ENCODE measurements at regions of chr1 and their contacts with region 1.

Region 1: DNA sequence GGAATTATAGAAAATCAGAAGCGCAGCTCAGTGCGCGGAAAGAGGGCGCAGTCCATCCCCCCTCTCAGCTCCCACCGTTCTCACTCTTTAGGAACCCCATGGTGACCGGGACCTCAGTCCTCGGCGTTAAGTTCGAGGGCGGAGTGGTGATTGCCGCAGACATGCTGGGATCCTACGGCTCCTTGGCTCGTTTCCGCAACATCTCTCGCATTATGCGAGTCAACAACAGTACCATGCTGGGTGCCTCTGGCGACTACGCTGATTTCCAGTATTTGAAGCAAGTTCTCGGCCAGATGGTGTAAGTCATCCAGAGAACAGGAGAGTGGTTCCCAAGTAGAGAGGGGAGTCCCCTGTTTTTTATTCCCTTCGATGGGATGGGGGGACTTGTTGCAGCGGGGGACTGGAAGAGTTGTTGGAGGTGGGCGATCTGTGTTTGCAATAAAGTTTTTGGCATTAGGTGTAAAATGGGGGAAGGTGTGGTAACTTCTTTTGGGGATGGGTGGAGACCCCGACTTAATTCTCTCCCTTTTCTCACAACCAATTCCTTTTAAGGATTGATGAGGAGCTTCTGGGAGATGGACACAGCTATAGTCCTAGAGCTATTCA is 620 bp downstream of the PSMB4 start:
- DNase-seq: no peak
- ATAC-seq: peak; percentile 11

Region 2: DNA sequence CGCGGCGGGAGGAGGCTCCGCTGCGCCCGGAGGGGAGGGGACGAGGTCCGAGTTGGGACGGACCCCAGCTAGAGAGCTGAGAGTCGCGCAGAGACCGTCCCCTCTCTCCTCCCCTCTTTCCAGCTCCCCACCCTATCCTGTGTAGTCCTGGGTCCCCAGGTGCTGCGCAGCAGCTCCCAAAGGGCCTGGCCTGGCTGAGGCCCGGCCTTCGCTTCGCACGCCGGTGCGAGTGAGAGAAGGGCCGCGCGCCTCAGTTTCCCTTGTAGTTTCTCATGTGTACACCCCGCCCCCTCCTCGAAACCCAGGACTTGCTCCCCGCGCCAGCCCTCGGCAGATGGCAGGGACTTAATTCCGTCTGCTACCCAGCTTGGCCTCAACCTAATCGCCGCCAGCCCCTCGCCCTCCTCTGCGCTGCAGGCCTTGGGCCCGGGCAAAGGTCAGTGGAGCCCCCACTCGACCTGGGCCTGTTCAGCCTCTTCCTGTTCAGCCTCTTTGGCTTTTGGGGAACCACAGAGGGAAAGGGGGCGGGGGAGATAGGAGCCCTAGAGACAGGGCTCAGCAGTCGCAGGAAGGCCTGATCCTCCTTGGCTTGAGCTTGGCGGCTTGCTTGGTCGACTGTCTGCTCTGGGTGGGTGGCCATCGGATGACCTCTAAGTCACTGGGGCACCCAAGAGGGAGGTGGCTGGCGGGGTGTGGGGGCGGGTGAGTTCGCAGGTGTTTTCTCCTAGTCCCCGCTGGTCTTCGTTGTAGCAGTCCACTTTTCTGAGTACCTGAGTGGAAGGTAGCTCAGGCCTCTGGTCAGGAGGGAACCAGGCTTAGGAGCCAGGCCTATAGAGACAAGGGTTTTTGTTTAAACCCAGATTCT is 116.9 kb before region 1 on chr1:
- intact Hi-C with region 1: loop called (anchors 1 kb)
- DNase-seq: peak; percentile 71
- ATAC-seq: no peak

Region 3: DNA sequence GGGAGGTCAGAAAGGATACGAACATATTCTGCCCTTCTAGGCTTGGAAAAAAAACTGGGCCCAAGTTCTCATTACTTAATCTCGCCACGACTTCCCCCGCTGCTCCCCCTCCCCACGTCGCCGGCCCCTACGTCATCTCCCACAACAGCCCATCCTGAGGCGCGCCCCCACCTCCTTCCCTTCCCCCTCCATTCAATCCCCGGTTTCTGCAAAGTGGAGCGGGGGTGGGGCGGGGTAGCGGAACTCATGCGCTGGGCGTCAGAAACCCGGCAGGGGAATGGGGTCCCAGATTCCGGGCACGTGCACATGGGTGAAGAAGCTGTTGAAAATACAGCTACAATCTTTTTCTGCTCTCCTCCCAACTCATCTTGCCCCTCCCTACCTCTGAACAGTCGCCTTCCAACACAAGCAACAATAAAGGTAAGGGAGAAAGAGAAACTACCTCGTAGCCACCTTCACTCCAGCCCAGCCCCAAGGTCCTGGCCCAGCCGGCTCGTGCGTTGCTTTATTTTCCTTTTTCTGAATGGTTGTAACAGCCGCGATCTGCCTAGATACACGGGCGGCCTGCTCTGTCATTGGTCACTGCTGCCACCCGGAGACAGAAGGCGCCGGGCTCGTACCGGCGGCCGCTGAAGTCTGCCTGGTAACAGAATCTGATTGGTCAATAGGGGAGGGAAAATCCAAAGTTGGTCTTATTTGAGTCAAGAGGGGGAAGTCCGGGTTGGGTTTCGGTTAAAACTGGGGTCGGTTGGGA is 53.0 kb before region 1 on chr1 and contains the start of gene RFX5:
- intact Hi-C with region 1: loop called (anchors 10 kb)
- DNase-seq: peak; percentile 93
- ATAC-seq: peak; percentile 99
- total RNA-seq, gene RFX5: 30.9 TPM

Region 4: GRCh38 chr1:152167835-152168519 is 768.0 kb after region 1 on chr1:
- intact Hi-C with region 1: no loop called
- DNase-seq: no peak
- ATAC-seq: peak; percentile 75

Measured in sciatic nerve (tissue), 2 donors.